ENCODE measurements at regions of chr6 and their contacts with region 1.

Region 1: GRCh38 chr6:167122041-167122826 is 662 bp upstream of the CCR6 start:
- DNase-seq: peak; percentile 69
- H3K4me3 Mint-ChIP-seq: peak overlapping the region; percentile 80
- H3K27ac Mint-ChIP-seq: peak overlapping the region; percentile 97
- H3K4me1 Mint-ChIP-seq: peaks cover 79% of the 10 kb centered on the region
- H3K27me3 Mint-ChIP-seq: no peaks in the 10 kb centered on the region

Region 2: GRCh38 chr6:167047554-167047953 is 74.7 kb before region 1 on chr6:
- CTCF ChIA-PET with region 1: interaction called, 10 read pairs
- POLR2A ChIA-PET with region 1: interaction called, 19 read pairs
- DNase-seq: peak; percentile 70
- H3K4me3 Mint-ChIP-seq: peak overlapping the region; percentile 34
- H3K27ac Mint-ChIP-seq: peak overlapping the region; percentile 63
- H3K4me1 Mint-ChIP-seq: peaks cover 35% of the 10 kb centered on the region
- H3K27me3 Mint-ChIP-seq: no peaks in the 10 kb centered on the region

Region 3: DNA sequence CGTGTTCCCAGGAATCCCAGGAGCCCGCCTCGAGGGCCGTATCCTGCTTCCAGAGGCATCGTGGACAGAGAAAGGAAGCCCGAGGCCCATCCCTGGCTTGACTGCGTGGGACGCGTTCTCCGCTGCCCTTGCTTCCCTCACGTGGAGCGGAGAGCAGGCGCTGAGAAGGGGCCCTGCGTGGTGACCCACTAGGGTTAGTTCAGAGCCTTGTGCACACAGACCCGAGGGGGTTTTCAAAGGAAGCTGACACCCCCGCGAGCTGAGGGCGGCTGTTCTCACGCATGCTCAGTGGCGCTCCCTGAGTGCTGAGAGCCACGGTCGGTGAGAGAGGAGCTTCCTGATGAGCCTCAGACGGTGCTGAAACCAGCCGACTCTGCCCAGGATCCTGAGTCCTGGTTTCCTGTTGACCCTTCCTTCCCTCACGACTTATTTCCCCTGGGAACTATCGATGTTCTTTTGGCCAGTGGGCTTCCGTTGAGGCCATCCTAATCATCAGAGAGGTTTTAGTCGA is 28.3 kb before region 1 on chr6:
- CTCF ChIA-PET with region 1: interaction called, 5 read pairs
- POLR2A ChIA-PET with region 1: interaction called, 12 read pairs
- DNase-seq: peak; percentile 55
- H3K4me3 Mint-ChIP-seq: peak overlapping the region; percentile 31
- H3K27ac Mint-ChIP-seq: peak overlapping the region; percentile 66
- H3K4me1 Mint-ChIP-seq: peaks cover 63% of the 10 kb centered on the region
- H3K27me3 Mint-ChIP-seq: peaks cover 3% of the 10 kb centered on the region

Region 4: DNA sequence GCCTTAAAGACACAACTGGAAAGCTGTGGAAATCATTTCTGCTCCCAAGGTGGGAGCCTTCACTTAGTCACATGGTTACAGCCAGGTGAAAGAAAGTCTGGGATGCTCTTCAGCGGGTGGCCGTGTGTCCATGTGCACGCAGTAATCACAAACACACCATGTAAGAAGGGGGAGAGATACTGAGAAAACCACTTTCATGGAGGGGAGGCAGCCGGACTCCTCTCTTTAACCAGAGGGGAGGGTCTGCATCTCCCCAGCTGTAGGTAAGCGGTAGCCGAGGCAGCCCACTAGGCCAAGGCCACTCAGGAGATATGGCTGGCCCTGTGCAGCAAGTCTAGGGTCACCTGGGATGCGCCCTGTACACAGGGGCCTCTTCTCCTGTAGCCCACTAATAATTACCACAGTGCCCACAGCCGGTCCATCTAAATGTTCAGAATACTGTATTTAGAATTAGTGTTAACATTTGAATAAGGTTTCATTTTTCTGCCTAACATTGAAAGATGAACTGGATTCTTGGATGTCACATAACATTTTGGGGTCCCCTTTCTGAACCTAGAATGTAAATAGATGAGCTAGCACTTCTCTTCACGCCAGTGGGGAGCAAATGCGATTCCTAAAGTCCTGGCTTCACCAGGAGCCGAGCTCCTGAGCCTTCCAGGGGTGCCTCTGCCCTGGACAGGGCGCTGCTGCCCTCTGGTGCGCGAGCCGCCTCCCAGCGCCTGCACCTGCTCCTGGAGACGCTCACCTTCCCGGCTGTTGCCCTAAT is 19.6 kb after region 1 on chr6:
- CTCF ChIA-PET with region 1: interaction called, 19 read pairs
- POLR2A ChIA-PET with region 1: interaction called, 32 read pairs
- DNase-seq: peak; percentile 57
- H3K4me3 Mint-ChIP-seq: no peak overlapping the region
- H3K27ac Mint-ChIP-seq: no peak overlapping the region
- H3K4me1 Mint-ChIP-seq: peaks cover 22% of the 10 kb centered on the region
- H3K27me3 Mint-ChIP-seq: no peaks in the 10 kb centered on the region